Esophagus muscularis mucosa (tissue), 4 donors: ENCODE measurements at regions of chr4 and their contacts with region 1.

Region 1: GRCh38 chr4:80335554-80336358 is at the start of gene CFAP299:
- DNase-seq: no peak
- H3K4me3 ChIP-seq: peak within 1 kb of the TSS; percentile 58 to 71 (median 66)
- H3K27ac ChIP-seq: peak within 1 kb of the TSS; percentile 30 to 67 (median 50)
- H3K4me1 ChIP-seq: peaks cover 0 to 37% (median 23%) of the 10 kb centered on the region in 4 donors
- H3K27me3 ChIP-seq: no peaks in the 10 kb centered on the region
- CTCF ChIP-seq: peak; percentile 44 to 56 (median 48)
- EP300 ChIP-seq: no peak
- POLR2A ChIP-seq: no peak
- total RNA-seq, gene CFAP299: 0.84 to 2.5 (median 2.2) TPM in 3 of 4 donors, not detected in the other

Region 2: DNA sequence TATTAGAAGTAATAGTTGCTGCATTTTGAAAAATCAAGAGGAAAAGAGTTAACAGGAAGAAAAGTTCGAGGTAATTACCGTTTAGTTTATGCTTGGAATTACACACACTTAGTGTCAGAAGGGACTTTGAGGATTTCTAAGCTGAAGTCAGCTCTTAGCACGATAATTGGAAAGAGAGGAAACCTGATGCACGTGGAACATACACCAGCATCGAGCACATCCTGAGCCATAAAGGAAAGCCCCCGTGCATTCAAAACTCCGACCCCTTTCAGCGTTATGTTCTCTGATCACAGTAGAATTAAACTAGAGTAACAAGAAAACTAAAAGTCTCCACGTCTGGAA is 1396.1 kb before region 1 on chr4:
- intact Hi-C with region 1: loop called (anchors 10 kb)
- DNase-seq: no peak
- H3K4me3 ChIP-seq: peak overlapping the region; percentile 72 to 98 (median 86)
- H3K27ac ChIP-seq: peak overlapping the region; percentile 85 to 91 (median 89)
- H3K4me1 ChIP-seq: peaks cover 13 to 47% (median 43%) of the 10 kb centered on the region in 4 donors
- H3K27me3 ChIP-seq: no peaks in the 10 kb centered on the region
- CTCF ChIP-seq: no peak
- EP300 ChIP-seq: no peak
- POLR2A ChIP-seq: no peak

Region 3: GRCh38 chr4:80266253-80266901 is 69.4 kb before region 1 on chr4 and contains the start of gene FGF5:
- intact Hi-C with region 1: loop called (anchors 10 kb)
- DNase-seq: no peak
- H3K4me3 ChIP-seq: peak within 1 kb of the TSS; percentile 65 to 77 (median 68)
- H3K27ac ChIP-seq: peak within 1 kb of the TSS; percentile 83 to 92 (median 86)
- H3K4me1 ChIP-seq: peaks cover 3 to 41% (median 36%) of the 10 kb centered on the region in 4 donors
- H3K27me3 ChIP-seq: peaks cover 0 to 55% (median 0%) of the 10 kb centered on the region in 4 donors
- CTCF ChIP-seq: no peak
- EP300 ChIP-seq: no peak
- POLR2A ChIP-seq: no peak
- total RNA-seq, gene FGF5: 1.2 to 4.2 (median 2.0) TPM

Region 4: DNA sequence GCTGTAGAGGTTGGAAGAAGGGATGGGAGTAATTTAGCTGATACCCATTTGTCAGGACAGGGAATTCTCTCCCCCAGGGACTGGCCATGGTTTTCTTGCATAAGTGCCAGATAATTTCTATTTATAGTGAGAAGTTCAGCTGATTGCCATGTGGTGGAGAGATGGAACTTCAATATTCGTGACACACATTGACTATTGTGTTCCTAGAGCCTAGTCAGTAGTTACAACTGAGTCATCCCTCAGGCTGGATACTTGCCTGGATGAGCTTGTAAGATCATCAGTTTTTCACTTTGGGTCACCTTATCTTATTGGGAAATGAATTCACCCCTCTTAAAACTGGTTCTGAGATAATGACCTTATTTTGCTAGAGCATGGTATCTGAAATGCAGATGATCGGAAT is 32.0 kb after region 1 on chr4:
- intact Hi-C with region 1: no loop called
- DNase-seq: no peak
- H3K4me3 ChIP-seq: no peak overlapping the region
- H3K27ac ChIP-seq: no peak overlapping the region
- H3K4me1 ChIP-seq: peaks cover 0 to 7% (median 2%) of the 10 kb centered on the region in 4 donors
- H3K27me3 ChIP-seq: no peaks in the 10 kb centered on the region
- CTCF ChIP-seq: no peak
- EP300 ChIP-seq: no peak
- POLR2A ChIP-seq: no peak

Region 5: GRCh38 chr4:80740375-80740774 is 404.6 kb after region 1 on chr4:
- intact Hi-C with region 1: no loop called
- DNase-seq: no peak
- H3K4me3 ChIP-seq: no peak overlapping the region
- H3K27ac ChIP-seq: no peak overlapping the region
- H3K4me1 ChIP-seq: no peaks in the 10 kb centered on the region
- H3K27me3 ChIP-seq: no peaks in the 10 kb centered on the region
- CTCF ChIP-seq: no peak
- EP300 ChIP-seq: no peak
- POLR2A ChIP-seq: no peak